SK-N-SH (cell line): ENCODE measurements at regions of chr2 and their contacts with region 1.

Region 1: DNA sequence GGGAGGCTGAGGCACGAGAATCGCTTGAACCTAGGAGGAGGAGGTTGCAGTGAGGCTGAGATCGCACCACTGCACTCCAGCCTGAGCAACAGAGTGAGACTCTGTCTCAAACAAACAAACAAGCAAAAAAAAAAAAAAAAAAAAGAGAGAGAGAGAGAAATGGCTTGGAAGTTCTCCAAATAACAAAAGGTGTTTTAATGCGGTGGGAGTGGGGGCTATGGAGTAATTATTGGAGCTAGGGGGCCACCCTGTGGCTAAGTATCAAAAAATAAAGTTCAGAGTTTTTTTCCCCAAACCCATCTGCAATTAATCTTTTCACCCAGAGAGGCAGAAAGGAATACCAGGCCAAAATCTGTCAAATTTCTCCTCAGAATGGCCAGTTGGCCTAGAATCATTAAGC is 23.0 kb upstream of the CEP68 start:
- DNase-seq: peak; percentile 44
- H3K4me3 ChIP-seq: no peak overlapping the region
- H3K27ac ChIP-seq: no peak overlapping the region
- H3K4me1 ChIP-seq: no peaks in the 10 kb centered on the region
- H3K27me3 ChIP-seq: no peaks in the 10 kb centered on the region
- CTCF ChIP-seq: peak; percentile 42
- EP300 ChIP-seq: no peak
- RAD21 ChIP-seq: peak; percentile 64

Region 2: GRCh38 chr2:65003037-65003436 is 30.1 kb before region 1 on chr2:
- CTCF ChIA-PET with region 1: no interaction called
- POLR2A ChIA-PET with region 1: no interaction called
- DNase-seq: no peak
- H3K4me3 ChIP-seq: no peak overlapping the region
- H3K27ac ChIP-seq: no peak overlapping the region
- H3K4me1 ChIP-seq: peaks cover 13 to 14% of the 10 kb centered on the region in 2 experiments; a peak in 2 of 4 replicates
- H3K27me3 ChIP-seq: no peaks in the 10 kb centered on the region
- CTCF ChIP-seq: no peak
- EP300 ChIP-seq: no peak
- RAD21 ChIP-seq: no peak

Region 3: GRCh38 chr2:65049010-65049669 is 16.0 kb after region 1 on chr2:
- CTCF ChIA-PET with region 1: interaction called, 13 read pairs
- POLR2A ChIA-PET with region 1: no interaction called
- DNase-seq: no peak
- H3K4me3 ChIP-seq: no peak overlapping the region
- H3K27ac ChIP-seq: no peak overlapping the region
- H3K4me1 ChIP-seq: no peaks in the 10 kb centered on the region
- H3K27me3 ChIP-seq: no peaks in the 10 kb centered on the region
- CTCF ChIP-seq: no peak
- EP300 ChIP-seq: no peak
- RAD21 ChIP-seq: no peak